ENCODE measurements at regions of chr2 and their contacts with region 1.

Region 1: DNA sequence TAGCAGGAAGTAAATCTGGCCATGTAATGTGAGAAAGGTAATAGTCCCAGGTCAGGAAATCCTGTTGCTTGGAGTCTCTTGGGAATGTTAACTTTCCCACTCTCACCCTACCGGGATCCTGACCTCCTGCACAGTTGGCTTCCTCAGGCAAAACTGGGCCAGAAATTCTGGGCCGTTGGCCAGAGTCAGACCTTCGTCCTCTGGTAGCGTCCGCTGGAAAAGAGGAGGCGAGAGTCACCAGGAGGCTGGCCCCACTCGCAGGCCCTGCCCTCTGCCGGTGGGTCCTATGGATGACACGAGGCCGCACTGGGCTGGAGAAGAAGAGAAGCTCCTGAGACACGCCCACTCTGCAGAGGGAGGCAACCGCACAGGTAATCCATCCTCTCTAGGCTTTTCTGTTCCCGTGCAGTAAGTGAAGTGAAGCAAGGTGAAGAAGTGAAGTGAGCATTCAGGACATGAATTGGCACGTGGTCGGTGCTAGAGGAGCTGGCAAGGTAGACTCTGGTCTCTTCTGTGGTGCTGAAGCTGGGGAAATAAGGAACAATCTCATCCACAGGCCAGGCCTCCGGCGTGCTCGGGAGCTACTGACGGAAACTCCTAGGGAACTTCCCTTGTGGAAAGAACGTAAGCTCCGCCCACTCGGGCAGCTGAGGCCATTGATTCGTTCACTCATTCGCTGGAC is 182.7 kb upstream of the GLI2 start:
- DNase-seq: peak; percentile 90 to 94
- ATAC-seq: peak; percentile 92 to 97 (median 96)
- H3K4me3 ChIP-seq: peak overlapping the region in 2 of 10 donors; percentile 2 to 16
- H3K27ac ChIP-seq: peak overlapping the region in 9 of 10 donors; percentile 36 to 84 (median 64)
- H3K4me1 ChIP-seq: peaks cover 10 to 50% (median 39%) of the 10 kb centered on the region in 9 donors
- H3K27me3 ChIP-seq: peaks cover 0 to 4% (median 0%) of the 10 kb centered on the region in 7 donors
- CTCF ChIP-seq: peak; percentile 73 to 93 (median 84)

Region 2: DNA sequence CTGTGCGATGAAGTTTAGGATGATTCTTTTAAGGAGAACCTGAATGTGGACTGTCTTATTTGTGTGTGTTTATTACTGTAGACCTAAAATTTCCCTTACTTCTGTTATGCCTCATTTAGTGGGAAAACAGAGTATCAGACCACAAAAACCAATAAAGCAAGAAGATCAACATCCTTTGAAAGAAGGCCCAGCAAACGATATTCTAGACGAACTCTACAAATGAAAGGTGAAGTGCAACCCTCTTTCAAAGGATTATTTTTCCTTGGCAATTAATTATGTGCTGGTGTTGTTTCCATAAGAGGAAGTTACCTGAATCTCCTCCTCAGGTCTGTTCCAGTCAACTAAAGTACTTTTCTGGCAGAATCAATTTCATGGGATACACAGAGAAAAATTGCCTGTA is 461.5 kb before region 1 on chr2:
- intact Hi-C with region 1: no loop called
- DNase-seq: no peak
- ATAC-seq: no peak
- H3K4me3 ChIP-seq: no peak overlapping the region
- H3K27ac ChIP-seq: no peak overlapping the region
- H3K4me1 ChIP-seq: no peaks in the 10 kb centered on the region
- H3K27me3 ChIP-seq: no peaks in the 10 kb centered on the region
- CTCF ChIP-seq: no peak

Region 3: DNA sequence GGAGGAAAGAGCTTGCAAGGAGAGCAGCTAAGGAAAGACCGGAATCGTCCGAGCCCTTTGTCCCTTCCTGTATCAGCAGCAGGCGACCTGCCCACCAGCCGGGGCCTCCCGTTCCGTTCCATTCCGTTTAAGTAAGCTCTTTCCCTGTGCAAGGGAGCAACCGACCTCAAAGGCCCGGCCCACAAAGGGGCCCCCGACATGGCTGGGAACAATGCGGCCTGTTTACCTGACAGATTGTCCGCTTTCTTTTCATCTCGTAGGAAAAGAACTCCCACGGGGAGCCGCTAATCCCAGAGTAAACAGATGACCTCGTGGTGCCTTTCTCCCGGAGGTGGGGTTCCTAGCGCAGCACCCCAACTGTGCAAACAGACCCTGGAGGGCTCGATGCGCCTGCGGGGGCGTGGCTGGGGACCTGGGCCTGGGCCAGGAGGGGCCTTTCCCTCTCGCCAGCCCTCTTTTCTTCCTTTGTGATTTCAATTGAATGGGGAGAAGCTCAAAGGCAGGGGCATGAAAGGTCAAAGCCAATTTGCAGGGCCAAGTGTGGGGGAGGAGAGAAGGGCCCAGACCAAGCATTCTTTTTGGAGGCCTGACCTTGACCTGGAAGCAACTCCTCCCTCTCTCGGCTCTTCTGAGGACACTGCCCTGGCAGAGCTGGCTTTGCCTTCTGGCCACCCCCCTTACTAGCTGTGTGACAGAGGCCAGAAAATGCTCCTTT is 86.8 kb before region 1 on chr2:
- intact Hi-C with region 1: no loop called
- DNase-seq: no peak
- ATAC-seq: peak in 1 of 8 donors; percentile 5
- H3K4me3 ChIP-seq: peak overlapping the region in 1 of 10 donors; percentile 12
- H3K27ac ChIP-seq: no peak overlapping the region
- H3K4me1 ChIP-seq: peaks cover 5 to 44% (median 34%) of the 10 kb centered on the region in 9 donors
- H3K27me3 ChIP-seq: peaks cover 0 to 5% (median 0%) of the 10 kb centered on the region in 7 donors
- CTCF ChIP-seq: no peak

Region 4: GRCh38 chr2:120503793-120504571 is 49.0 kb before region 1 on chr2:
- intact Hi-C with region 1: loop called in 1 of 10 experiments (anchors 5 kb)
- DNase-seq: peak; percentile 72 to 73
- ATAC-seq: peak; percentile 66 to 96 (median 90)
- H3K4me3 ChIP-seq: no peak overlapping the region
- H3K27ac ChIP-seq: peak overlapping the region in 9 of 10 donors; percentile 46 to 78 (median 60)
- H3K4me1 ChIP-seq: peaks cover 0 to 21% (median 9%) of the 10 kb centered on the region in 9 donors
- H3K27me3 ChIP-seq: peaks cover 0 to 5% (median 0%) of the 10 kb centered on the region in 7 donors
- CTCF ChIP-seq: peak in 4 of 9 donors; percentile 15 to 50 (median 34)

Region 5: DNA sequence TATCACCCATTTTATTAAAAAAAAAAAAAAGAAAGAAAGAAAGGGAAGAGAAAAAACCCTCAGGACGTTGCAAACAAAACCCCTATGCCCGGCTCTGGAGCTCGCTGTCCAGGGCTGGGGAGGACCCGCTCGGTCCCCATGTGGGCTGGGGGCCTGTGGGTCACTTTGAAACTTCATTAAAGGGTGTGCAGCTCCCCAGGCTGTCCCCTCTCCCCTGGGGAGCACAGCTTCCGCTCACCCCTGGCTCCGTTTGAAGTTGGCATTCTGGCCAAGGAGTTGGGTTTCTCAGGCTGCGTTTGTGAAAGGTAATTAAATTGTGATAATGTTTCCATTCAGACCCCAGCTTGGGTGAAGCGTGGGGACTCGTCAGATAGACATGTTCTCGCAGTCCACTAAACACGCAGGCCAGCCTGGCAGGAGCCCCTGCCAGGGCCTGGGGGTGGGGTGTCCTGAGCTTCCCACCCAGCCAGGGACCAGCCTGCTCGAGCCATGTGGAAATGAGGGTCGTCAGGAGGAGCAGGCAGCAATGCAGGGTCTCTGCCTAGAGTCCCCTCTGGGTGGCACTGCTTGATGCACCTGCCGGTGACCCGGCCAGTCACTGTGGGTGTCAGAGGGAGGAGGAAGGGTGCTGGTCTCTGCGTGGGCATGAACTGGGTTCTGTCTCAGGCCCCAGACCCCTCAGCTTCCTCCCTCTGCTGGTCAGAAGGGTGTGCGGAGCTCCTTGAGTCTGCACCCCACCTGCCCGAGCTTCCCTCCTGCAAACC is 40.8 kb before region 1 on chr2:
- intact Hi-C with region 1: loop called in 2 of 10 experiments (anchors 5 kb)
- DNase-seq: no peak
- ATAC-seq: peak in 2 of 8 donors; percentile 16 to 50
- H3K4me3 ChIP-seq: no peak overlapping the region
- H3K27ac ChIP-seq: no peak overlapping the region
- H3K4me1 ChIP-seq: peaks cover 0 to 26% (median 6%) of the 10 kb centered on the region in 9 donors
- H3K27me3 ChIP-seq: peaks cover 0 to 18% (median 0%) of the 10 kb centered on the region in 7 donors
- CTCF ChIP-seq: peak in 1 of 9 donors; percentile 21

Region 6: DNA sequence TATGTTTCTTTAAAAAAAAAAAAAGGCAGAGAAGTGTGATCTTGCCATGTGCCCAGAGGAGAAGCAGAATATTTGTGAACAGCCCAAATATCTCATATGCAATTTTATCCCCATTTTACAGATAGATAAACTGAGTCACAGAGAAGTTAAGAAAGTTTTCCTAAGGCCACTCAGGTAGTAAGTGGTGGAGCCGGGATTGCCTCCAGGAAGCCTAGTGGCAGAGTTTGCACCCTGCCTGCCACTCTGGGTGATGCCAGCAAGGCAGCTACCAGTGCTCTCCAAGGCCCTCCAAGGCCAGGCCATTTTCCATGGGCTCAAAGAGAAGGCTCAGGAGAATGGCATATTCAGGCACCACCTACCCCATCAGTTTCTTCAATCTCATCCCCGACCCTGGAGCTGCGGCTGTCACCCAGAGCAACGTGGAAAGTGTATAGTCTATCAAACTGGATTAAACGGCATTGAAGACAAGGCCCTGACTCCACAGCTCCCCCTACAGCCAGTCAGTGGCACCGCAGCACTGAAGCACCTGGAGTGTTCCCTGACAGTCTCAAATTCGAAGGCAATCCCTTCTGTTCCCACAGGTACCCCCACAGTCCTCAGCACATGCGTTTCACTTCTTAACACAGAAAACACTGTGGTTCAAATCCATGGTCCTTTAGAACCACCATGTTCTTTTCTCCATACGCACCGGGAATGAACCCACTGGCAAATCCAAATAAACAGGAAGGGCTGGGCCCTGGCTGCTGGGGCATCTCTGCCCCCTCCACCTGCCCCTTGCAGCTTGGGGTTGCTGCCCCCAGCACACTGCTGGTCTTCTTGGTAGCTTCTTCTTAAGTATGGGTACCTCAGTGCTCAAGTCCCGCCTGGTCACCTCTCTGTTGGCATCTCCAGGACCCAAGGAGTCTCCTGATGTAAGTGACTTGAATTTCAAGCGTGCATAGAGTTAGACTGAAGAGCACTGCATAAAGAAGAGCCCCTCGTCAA is 31.7 kb before region 1 on chr2:
- intact Hi-C with region 1: loop called in 1 of 10 experiments (anchors 5 kb)
- DNase-seq: no peak
- ATAC-seq: peak in 4 of 8 donors; percentile 14 to 60 (median 27)
- H3K4me3 ChIP-seq: no peak overlapping the region
- H3K27ac ChIP-seq: no peak overlapping the region
- H3K4me1 ChIP-seq: peaks cover 12 to 41% (median 30%) of the 10 kb centered on the region in 9 donors
- H3K27me3 ChIP-seq: peaks cover 0 to 34% (median 16%) of the 10 kb centered on the region in 7 donors
- CTCF ChIP-seq: peak; percentile 29 to 81 (median 70)

Region 7: GRCh38 chr2:120669121-120669952 is 116.4 kb after region 1 on chr2:
- intact Hi-C with region 1: loop called in 4 of 10 experiments (anchors 5 to 10 kb)
- DNase-seq: no peak
- ATAC-seq: peak in 6 of 8 donors; percentile 30 to 61 (median 44)
- H3K4me3 ChIP-seq: no peak overlapping the region
- H3K27ac ChIP-seq: no peak overlapping the region
- H3K4me1 ChIP-seq: peaks cover 0 to 9% (median 0%) of the 10 kb centered on the region in 9 donors
- H3K27me3 ChIP-seq: peaks cover 0 to 53% (median 36%) of the 10 kb centered on the region in 7 donors
- CTCF ChIP-seq: peak in 5 of 9 donors; percentile 23 to 40 (median 37)

Measured in heart right ventricle (tissue), 16 donors.